BJ (cell line): ENCODE measurements at regions of chr2 and their contacts with region 1.

Region 1: GRCh38 chr2:184611361-184612085 is 13.2 kb downstream of the ZNF804A start:
- DNase-seq: no peak
- H3K4me3 ChIP-seq: no peak overlapping the region
- H3K27me3 ChIP-seq: no peaks in the 10 kb centered on the region
- CTCF ChIP-seq: peak; percentile 44

Region 2: DNA sequence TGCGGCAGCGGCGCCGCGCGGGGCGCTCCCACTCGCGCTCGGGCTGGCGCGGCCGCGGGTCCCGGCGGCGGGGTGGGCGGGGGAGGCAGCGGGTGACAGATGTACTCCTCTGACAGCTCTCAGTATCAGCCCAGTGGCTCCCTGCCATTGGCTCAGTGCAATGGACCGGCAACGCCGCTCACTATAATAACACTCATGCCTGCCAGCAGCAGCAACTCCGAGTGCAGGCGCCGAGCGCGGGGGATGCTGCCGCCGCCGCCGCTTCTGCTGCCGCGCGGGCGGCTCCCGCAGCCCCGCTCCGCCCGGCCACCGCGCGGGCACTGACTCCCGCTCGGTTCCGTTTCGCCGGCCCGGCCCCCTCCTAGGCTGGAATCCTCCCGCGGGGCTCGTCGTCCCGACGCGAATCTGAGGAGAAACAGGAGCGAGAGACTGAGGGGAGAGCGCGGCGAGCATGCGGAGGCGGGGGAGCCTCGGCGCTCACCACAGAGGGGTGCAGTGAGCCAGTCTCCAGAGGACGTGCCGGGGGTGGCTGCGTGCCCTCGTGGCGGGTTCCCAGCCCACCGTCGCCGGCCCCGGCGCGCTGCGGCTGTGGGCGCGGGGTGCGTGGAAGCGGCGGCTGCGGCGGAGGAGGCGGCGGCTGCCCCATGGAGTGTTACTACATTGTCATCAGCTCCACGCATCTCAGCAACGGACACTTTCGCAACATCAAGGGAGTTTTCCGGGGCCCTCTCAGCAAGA is 13.0 kb before region 1 on chr2 and contains the start of gene ZNF804A:
- CTCF ChIA-PET with region 1: interaction called, 10 read pairs
- POLR2A ChIA-PET with region 1: interaction called, 4 read pairs
- DNase-seq: no peak
- H3K4me3 ChIP-seq: peak within 1 kb of the TSS; percentile 77
- H3K27me3 ChIP-seq: no peaks in the 10 kb centered on the region
- CTCF ChIP-seq: no peak
- polyA plus RNA-seq, gene ZNF804A: 0.53 and 0.96 TPM in 2 replicates